ENCODE measurements at regions of chr4 and their contacts with region 1.

Region 1: DNA sequence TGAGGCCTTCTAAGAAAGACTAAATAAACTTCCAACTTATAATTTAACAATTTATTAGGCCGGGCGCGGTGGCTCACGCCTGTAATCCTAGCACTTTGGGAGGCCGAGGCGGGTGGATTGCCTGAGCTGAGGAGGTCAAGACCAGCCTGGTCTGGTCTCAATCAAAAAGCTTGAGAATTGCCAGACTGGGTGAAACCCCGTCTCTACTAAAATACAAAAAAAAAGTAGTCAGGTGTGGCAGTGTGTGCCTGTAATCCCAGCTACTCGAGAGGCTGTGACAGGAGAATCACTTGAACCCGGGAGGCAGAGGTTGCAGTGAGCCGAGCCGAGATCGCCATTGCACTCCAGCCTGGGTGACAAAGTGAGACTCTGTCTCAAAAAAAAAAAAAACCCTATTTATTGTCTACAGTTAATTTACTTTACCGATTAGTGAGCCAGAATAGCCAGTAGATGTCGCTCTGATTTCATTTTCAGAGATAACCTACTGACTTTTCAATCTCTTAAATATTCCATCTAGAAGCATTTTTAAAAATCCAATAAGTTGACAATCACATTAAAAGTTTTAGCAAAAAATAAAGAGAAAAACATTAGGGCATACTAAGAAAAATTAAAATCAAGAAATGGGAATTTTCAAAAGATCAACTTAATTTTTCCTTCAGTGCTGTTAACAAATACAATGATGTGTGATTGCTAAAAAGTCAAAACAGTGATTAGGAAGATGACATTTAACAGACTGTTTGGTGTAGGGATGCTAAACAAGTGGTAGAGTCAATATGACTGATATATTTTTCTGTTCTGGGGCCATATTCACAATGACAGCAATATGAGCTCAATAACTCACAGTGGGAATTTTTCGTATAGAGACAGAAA is 4.3 kb upstream of the SHROOM3 start:
- DNase-seq: no peak
- H3K4me3 Mint-ChIP-seq: no peak overlapping the region
- H3K27ac Mint-ChIP-seq: no peak overlapping the region
- H3K4me1 Mint-ChIP-seq: peaks cover 4% of the 10 kb centered on the region
- H3K27me3 Mint-ChIP-seq: peaks cover 12% of the 10 kb centered on the region

Region 2: DNA sequence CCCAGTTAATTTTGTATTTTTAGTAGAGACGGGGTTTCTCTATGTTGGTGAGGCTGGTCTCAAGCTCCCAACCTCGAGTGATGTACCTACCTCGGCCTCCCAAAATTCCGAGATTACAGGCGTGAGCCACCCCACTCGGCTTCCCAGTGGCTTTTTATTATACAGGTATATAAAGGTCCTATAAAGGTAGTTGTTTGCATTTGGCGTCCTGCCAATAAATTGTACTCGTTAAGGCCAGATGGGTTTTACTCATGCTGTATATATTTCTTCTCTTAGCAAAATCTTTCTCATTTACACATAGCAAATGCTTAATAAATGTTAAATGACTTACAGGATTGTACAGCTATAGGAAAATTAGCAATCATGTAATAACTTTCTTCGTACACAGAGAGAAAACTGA is 11.1 kb after region 1 on chr4:
- CTCF ChIA-PET with region 1: interaction called, 12 read pairs
- intact Hi-C with region 1: no loop called
- DNase-seq: no peak
- H3K4me3 Mint-ChIP-seq: no peak overlapping the region
- H3K27ac Mint-ChIP-seq: no peak overlapping the region
- H3K4me1 Mint-ChIP-seq: no peaks in the 10 kb centered on the region
- H3K27me3 Mint-ChIP-seq: peaks cover 24% of the 10 kb centered on the region

Region 3: DNA sequence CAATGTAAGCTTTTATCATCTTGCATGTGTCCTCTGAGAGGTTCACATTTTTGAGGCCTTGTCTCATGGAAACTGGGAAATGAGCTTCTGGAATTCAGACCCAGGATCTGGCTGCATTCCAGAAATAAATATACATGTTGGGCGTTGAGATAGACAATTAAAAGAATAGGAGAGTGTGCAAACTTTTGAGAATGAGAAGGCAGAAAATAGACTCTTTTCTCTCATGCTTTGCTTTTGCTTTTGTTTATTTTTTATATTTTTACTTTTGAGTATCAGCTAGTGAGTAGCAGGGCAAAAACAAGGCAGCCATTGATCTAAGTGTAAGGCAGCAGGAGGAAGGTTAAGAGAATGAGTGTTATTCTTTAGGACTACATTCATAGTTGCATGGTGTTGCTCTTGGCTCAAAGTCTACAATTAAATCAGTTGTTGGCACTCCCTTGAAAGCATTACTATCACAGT is 16.7 kb after region 1 on chr4:
- CTCF ChIA-PET with region 1: interaction called, 10 read pairs
- intact Hi-C with region 1: no loop called
- DNase-seq: no peak
- H3K4me3 Mint-ChIP-seq: no peak overlapping the region
- H3K27ac Mint-ChIP-seq: no peak overlapping the region
- H3K4me1 Mint-ChIP-seq: no peaks in the 10 kb centered on the region
- H3K27me3 Mint-ChIP-seq: peaks cover 4% of the 10 kb centered on the region

Region 4: DNA sequence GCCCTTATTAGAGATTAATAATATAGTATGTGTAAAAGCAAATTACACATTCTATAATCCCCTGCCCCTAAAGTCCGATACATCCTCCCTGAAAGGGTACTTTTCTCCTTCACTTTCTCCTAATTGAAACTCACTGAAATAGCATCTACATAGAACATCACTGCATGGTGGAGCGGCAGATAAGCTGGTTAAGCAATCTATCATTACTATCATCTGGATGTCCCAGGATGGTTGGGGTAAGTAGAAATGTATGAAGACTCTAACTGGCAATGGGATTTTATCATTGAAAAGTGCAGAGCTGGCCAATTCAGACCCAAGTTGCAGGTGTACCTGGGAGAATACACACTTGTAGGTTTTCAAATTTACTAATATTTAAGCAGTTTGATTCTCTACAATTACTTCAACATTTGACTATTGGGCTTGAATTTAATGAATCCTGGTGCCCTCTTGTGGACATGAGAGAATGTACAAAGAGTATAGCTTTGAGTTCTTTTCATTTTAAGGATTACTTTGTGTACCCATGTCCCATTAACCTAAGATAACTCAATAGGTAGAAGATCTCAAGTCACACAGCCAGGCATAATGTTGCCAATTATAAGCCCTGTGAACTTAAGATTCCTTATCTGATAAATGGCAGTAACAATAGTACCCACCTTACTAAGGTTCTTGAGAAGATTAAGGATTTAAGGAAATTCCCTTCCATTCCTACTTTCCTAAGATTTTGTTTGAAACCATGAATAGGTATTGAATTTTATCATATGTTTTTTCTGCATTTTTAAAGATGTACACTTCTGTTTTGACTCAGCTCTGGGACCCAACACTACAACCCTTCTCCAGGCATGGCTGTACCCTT is 74.1 kb after region 1 on chr4:
- CTCF ChIA-PET with region 1: interaction called, 74 read pairs
- intact Hi-C with region 1: loop called (anchors 1 kb)
- DNase-seq: no peak
- H3K4me3 Mint-ChIP-seq: no peak overlapping the region
- H3K27ac Mint-ChIP-seq: no peak overlapping the region
- H3K4me1 Mint-ChIP-seq: no peaks in the 10 kb centered on the region
- H3K27me3 Mint-ChIP-seq: peaks cover 13% of the 10 kb centered on the region

Region 5: DNA sequence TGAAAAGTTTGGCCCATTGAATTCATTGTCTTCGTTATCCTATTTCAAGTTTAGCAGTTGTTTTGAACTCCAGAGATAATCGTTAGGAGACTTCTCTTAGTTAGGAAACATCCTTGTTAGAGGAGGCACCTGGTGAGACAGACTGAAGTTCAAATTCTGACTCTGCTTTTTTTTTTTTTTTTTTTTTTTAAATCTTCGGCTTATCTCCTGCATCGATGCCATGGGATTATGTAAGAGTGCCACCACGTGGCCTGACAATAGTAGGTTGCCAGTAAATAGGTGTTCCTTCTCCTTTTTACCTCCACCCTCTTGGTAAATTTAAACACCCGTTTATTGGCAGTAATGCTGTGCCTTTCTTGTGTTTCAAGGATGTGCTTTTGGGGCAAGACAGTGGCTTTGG is 317.9 kb after region 1 on chr4:
- CTCF ChIA-PET with region 1: interaction called, 6 read pairs
- intact Hi-C with region 1: loop called (anchors 2 kb)
- DNase-seq: peak; percentile 68
- H3K4me3 Mint-ChIP-seq: no peak overlapping the region
- H3K27ac Mint-ChIP-seq: no peak overlapping the region
- H3K4me1 Mint-ChIP-seq: peaks cover 2% of the 10 kb centered on the region
- H3K27me3 Mint-ChIP-seq: peaks cover 18% of the 10 kb centered on the region